Heart right ventricle (tissue), 16 donors: ENCODE measurements at regions of chr16 and their contacts with region 1.

Region 1: GRCh38 chr16:10325783-10326543 is 59.9 kb upstream of the ATF7IP2 start:
- DNase-seq: peak in 1 of 2 donors; percentile 62
- ATAC-seq: peak in 7 of 8 donors; percentile 56 to 86 (median 78)
- H3K4me3 ChIP-seq: no peak overlapping the region
- H3K27ac ChIP-seq: peak overlapping the region in 6 of 10 donors; percentile 14 to 60 (median 46)
- H3K4me1 ChIP-seq: peaks cover 0 to 12% (median 0%) of the 10 kb centered on the region in 9 donors
- H3K27me3 ChIP-seq: no peaks in the 10 kb centered on the region
- CTCF ChIP-seq: no peak

Region 2: DNA sequence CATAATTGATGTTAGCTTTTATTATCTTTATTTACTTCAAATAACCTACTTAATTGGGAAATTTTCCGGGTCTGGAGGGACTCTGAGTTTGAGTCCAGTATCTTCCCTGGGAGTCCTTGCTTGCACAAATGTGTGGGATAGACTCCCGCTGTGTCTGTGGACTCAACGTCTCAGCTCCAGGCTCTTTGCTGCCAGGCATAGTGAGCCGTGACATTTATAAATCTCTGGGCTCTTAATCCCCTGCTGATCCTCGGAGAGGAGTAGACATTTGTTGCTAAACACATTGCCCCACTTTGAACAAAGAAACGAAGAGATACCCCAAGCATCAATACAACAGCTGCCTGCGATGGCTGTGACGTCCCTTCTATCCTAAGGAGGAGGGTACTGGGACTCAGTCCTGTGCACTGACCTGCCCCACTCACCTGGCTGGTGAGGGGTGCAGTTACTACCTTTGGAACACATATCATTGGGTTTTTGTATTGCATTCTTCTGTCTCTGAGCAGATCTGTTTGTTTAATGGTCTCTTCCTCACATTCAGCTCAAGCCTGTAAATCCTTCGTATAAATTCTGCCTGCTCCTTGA is 917.6 kb before region 1 on chr16:
- intact Hi-C with region 1: no loop called
- DNase-seq: no peak
- ATAC-seq: no peak
- H3K4me3 ChIP-seq: no peak overlapping the region
- H3K27ac ChIP-seq: no peak overlapping the region
- H3K4me1 ChIP-seq: no peaks in the 10 kb centered on the region
- H3K27me3 ChIP-seq: no peaks in the 10 kb centered on the region
- CTCF ChIP-seq: no peak

Region 3: DNA sequence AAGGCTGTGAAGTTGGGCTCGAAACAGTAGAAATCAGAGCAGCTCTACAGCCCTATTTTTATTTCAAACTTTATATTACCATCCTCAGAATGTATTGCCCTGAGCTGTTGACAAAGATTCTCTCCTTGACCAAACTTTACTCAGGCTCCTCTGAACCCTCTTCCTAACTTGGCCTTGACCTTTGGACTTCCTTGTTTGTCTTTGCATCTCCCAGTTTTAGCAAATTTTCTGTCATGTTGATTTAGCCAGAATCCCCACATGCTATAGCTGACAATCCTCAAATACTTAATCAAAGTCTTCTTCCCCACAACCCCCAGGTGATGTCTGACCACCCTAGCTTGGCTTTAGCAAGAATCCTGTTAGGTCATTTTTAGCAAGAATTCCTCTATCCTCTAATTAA is 56.3 kb before region 1 on chr16:
- intact Hi-C with region 1: no loop called
- DNase-seq: no peak
- ATAC-seq: no peak
- H3K4me3 ChIP-seq: no peak overlapping the region
- H3K27ac ChIP-seq: no peak overlapping the region
- H3K4me1 ChIP-seq: no peaks in the 10 kb centered on the region
- H3K27me3 ChIP-seq: peaks cover 0 to 2% (median 0%) of the 10 kb centered on the region in 7 donors
- CTCF ChIP-seq: no peak

Region 4: GRCh38 chr16:10937068-10937859 is 611.3 kb after region 1 on chr16:
- intact Hi-C with region 1: loop called in 1 of 10 experiments (anchors 10 kb)
- DNase-seq: no peak
- ATAC-seq: peak in 3 of 8 donors; percentile 14 to 33 (median 18)
- H3K4me3 ChIP-seq: peak overlapping the region in 8 of 10 donors; percentile 14 to 89 (median 40)
- H3K27ac ChIP-seq: peak overlapping the region in 9 of 10 donors; percentile 65 to 94 (median 90)
- H3K4me1 ChIP-seq: peaks cover 39 to 91% (median 88%) of the 10 kb centered on the region in 9 donors
- H3K27me3 ChIP-seq: no peaks in the 10 kb centered on the region
- CTCF ChIP-seq: peak in 2 of 9 donors; percentile 15 to 25